ENCODE measurements at regions of chr9 and their contacts with region 1.

Region 1: DNA sequence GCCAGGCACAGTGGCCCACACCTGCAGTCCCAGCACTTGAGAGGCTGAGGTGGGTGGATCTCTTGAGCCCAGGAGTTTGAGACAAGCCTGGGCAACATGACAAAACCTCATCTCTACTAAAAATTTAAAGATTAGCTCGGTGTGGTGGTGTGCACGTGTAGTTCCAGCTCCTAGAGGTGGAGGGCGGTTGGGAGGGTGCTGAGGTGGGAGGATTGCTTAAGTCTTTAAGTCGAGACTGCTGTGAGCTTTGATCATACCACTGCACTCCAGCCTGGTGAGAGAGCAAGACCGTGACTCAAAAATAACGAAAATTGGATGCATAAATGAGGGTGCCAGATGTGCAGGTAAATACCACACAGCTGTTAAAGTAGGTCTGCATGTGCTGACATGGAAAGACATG is 39.3 kb upstream of the TDRD7 start:
- DNase-seq: no peak
- H3K4me3 ChIP-seq: no peak overlapping the region
- H3K27ac ChIP-seq: no peak overlapping the region
- H3K4me1 ChIP-seq: no peaks in the 10 kb centered on the region
- H3K27me3 ChIP-seq: no peaks in the 10 kb centered on the region

Region 2: GRCh38 chr9:97437051-97437600 is 64.5 kb after region 1 on chr9:
- in situ Hi-C with region 1: loop called (anchors 10 kb)
- DNase-seq: no peak
- H3K4me3 ChIP-seq: no peak overlapping the region
- H3K27ac ChIP-seq: no peak overlapping the region
- H3K4me1 ChIP-seq: no peaks in the 10 kb centered on the region
- H3K27me3 ChIP-seq: no peaks in the 10 kb centered on the region

Region 3: DNA sequence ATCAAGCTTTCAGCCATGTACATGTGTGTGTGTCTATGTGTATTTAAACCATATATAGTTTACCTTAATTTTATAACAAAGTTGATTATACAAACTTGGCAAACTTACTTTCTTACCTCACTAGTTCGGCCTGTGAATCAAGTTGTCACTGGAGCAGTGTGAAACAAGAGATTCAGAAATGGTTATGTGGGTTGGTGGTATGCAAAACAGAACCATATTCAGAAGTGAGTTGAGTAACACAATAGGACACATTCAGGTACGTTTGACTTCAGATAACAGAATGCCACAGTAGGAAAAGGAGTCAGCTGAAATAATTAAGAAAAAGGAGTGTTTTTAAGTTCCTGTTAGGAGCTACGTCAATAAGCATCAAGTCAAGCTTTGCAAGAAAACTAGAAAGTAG is 303.1 kb after region 1 on chr9:
- in situ Hi-C with region 1: no loop called
- DNase-seq: no peak
- H3K4me3 ChIP-seq: no peak overlapping the region
- H3K27ac ChIP-seq: no peak overlapping the region
- H3K4me1 ChIP-seq: no peaks in the 10 kb centered on the region
- H3K27me3 ChIP-seq: no peaks in the 10 kb centered on the region